ENCODE measurements at regions of chr6 and their contacts with region 1.

Region 1: GRCh38 chr6:142946181-142946923 is 1.4 kb upstream of the HIVEP2 start:
- DNase-seq: peak; percentile 96
- ATAC-seq: peak; percentile 54
- H3K4me3 ChIP-seq: peak overlapping the region; percentile 94
- H3K27ac ChIP-seq: peak overlapping the region; percentile 92
- H3K4me1 ChIP-seq: peaks cover 23% of the 10 kb centered on the region
- H3K27me3 ChIP-seq: no peaks in the 10 kb centered on the region
- CTCF ChIP-seq: no peak

Region 2: GRCh38 chr6:142444881-142445301 is 501.5 kb before region 1 on chr6:
- CTCF ChIA-PET with region 1: no interaction called
- POLR2A ChIA-PET with region 1: no interaction called
- intact Hi-C with region 1: no loop called
- DNase-seq: peak; percentile 10
- ATAC-seq: peak; percentile 56
- H3K4me3 ChIP-seq: no peak overlapping the region
- H3K27ac ChIP-seq: peak overlapping the region; percentile 47
- H3K4me1 ChIP-seq: peaks cover 14% of the 10 kb centered on the region
- H3K27me3 ChIP-seq: no peaks in the 10 kb centered on the region
- CTCF ChIP-seq: no peak

Region 3: GRCh38 chr6:142692942-142693341 is 253.4 kb before region 1 on chr6:
- CTCF ChIA-PET with region 1: interaction called, 3 read pairs
- POLR2A ChIA-PET with region 1: interaction called, 4 read pairs
- intact Hi-C with region 1: loop called (anchors 1 kb)
- DNase-seq: peak; percentile 65
- ATAC-seq: peak; percentile 25
- H3K4me3 ChIP-seq: no peak overlapping the region
- H3K27ac ChIP-seq: peak overlapping the region; percentile 42
- H3K4me1 ChIP-seq: peaks cover 32% of the 10 kb centered on the region
- H3K27me3 ChIP-seq: no peaks in the 10 kb centered on the region
- CTCF ChIP-seq: peak; percentile 88

Region 4: GRCh38 chr6:142854589-142855488 is 91.5 kb before region 1 on chr6:
- CTCF ChIA-PET with region 1: interaction called, 8 read pairs
- POLR2A ChIA-PET with region 1: interaction called, 32 read pairs
- intact Hi-C with region 1: no loop called
- DNase-seq: no peak
- ATAC-seq: no peak
- H3K4me3 ChIP-seq: no peak overlapping the region
- H3K27ac ChIP-seq: peak overlapping the region; percentile 96
- H3K4me1 ChIP-seq: peaks cover 53% of the 10 kb centered on the region
- H3K27me3 ChIP-seq: no peaks in the 10 kb centered on the region
- CTCF ChIP-seq: no peak

Region 5: GRCh38 chr6:143015300-143015706 is 69.0 kb after region 1 on chr6:
- CTCF ChIA-PET with region 1: no interaction called
- POLR2A ChIA-PET with region 1: interaction called, 4 read pairs
- intact Hi-C with region 1: loop called (anchors 1 kb)
- DNase-seq: no peak
- ATAC-seq: no peak
- H3K4me3 ChIP-seq: no peak overlapping the region
- H3K27ac ChIP-seq: peak overlapping the region; percentile 98
- H3K4me1 ChIP-seq: peaks cover 26% of the 10 kb centered on the region
- H3K27me3 ChIP-seq: no peaks in the 10 kb centered on the region
- CTCF ChIP-seq: no peak

Region 6: GRCh38 chr6:143158113-143158581 is 211.8 kb after region 1 on chr6:
- CTCF ChIA-PET with region 1: no interaction called
- POLR2A ChIA-PET with region 1: no interaction called
- intact Hi-C with region 1: loop called (anchors 2 kb)
- DNase-seq: no peak
- ATAC-seq: peak; percentile 55
- H3K4me3 ChIP-seq: no peak overlapping the region
- H3K27ac ChIP-seq: no peak overlapping the region
- H3K4me1 ChIP-seq: no peaks in the 10 kb centered on the region
- H3K27me3 ChIP-seq: no peaks in the 10 kb centered on the region
- CTCF ChIP-seq: no peak

Region 7: GRCh38 chr6:143397229-143398222 is 451.2 kb after region 1 on chr6:
- CTCF ChIA-PET with region 1: no interaction called
- POLR2A ChIA-PET with region 1: interaction called, 6 read pairs
- intact Hi-C with region 1: loop called (anchors 2 kb)
- DNase-seq: peak; percentile 92
- ATAC-seq: peak; percentile 79
- H3K4me3 ChIP-seq: peak overlapping the region; percentile 47
- H3K27ac ChIP-seq: peak overlapping the region; percentile 95
- H3K4me1 ChIP-seq: peaks cover 49% of the 10 kb centered on the region
- H3K27me3 ChIP-seq: no peaks in the 10 kb centered on the region
- CTCF ChIP-seq: no peak

Region 8: DNA sequence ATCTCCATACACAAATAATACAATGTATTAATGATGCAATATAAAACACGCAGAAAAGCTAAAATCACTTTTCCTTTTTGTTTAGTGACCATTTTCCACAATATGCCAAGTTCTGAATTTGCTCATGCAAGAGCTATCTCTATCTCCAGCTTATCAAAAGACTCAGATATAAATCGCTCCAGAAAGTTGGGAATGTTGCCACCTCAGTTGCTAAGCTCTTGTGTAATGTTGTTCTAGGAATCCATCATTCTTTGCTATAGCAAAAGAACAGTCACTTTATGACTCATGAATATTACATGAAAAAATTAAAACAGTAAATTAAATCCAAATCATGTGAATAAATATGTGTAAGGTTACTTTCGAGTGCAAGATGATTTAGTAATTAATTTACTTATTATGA is 1053.1 kb after region 1 on chr6:
- CTCF ChIA-PET with region 1: no interaction called
- POLR2A ChIA-PET with region 1: no interaction called
- intact Hi-C with region 1: no loop called
- DNase-seq: peak; percentile 8
- ATAC-seq: no peak
- H3K4me3 ChIP-seq: no peak overlapping the region
- H3K27ac ChIP-seq: no peak overlapping the region
- H3K4me1 ChIP-seq: no peaks in the 10 kb centered on the region
- H3K27me3 ChIP-seq: no peaks in the 10 kb centered on the region
- CTCF ChIP-seq: no peak